MCF 10A (cell line): ENCODE measurements at regions of chr6 and their contacts with region 1.

Region 1: DNA sequence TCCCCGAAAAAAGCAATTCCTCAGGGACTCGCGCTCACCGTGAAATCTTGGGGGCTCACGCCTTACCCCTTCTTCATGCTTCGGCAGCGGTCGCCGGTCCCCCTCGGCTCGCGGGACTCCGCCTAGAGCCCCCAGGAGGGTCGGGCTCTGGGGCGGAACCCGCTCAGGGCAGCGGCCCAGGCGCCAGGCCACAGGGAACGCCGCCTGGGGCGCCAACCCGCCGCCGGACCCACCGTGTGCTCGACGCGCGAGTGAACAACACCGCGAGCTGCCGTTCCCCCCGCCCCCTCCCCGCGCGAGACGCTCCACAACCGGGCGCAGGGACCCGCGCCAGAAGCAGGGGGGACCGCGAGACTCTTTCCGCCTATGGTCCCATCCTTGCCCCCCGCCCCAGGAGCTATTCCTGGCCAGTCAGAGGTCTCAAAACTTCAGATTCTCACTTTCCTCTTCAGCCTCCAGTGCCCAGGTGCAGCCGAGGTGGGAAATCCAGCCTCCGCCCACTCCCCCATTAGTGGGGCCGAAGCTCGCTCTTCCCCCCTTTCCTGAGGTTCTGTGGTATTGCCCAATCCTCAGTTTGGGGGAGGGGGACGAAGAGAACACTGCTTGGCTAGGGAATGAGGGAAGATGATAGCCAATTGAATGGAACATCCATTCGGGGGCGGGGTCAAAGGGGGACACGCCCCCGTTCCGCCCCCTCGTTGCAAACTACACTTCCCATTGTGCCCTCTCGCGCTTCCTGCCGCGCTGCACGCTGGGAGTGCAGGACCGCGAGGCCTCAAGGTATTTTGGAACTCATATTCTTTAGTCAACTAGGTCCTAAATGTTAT is at the start of gene WASF1:
- DNase-seq: peak; percentile 99
- H3K4me3 Mint-ChIP-seq: no peak within 1 kb of the TSS
- H3K27ac Mint-ChIP-seq: peak within 1 kb of the TSS; percentile 40
- H3K4me1 Mint-ChIP-seq: peaks cover 16% of the 10 kb centered on the region
- H3K27me3 Mint-ChIP-seq: no peaks in the 10 kb centered on the region
- CTCF ChIP-seq: no peak
- total RNA-seq, gene WASF1: 50.5 and 55.7 TPM in 2 replicates

Region 2: GRCh38 chr6:109961666-109962065 is 217.9 kb before region 1 on chr6:
- CTCF ChIA-PET with region 1: no interaction called
- POLR2A ChIA-PET with region 1: no interaction called
- intact Hi-C with region 1: no loop called
- DNase-seq: peak; percentile 39
- H3K4me3 Mint-ChIP-seq: no peak overlapping the region
- H3K27ac Mint-ChIP-seq: no peak overlapping the region
- H3K4me1 Mint-ChIP-seq: peaks cover 8% of the 10 kb centered on the region
- H3K27me3 Mint-ChIP-seq: no peaks in the 10 kb centered on the region
- CTCF ChIP-seq: no peak

Region 3: GRCh38 chr6:110083875-110084585 is 95.6 kb before region 1 on chr6:
- CTCF ChIA-PET with region 1: no interaction called
- POLR2A ChIA-PET with region 1: no interaction called
- intact Hi-C with region 1: loop called (anchors 5 kb)
- DNase-seq: no peak
- H3K4me3 Mint-ChIP-seq: no peak overlapping the region
- H3K27ac Mint-ChIP-seq: no peak overlapping the region
- H3K4me1 Mint-ChIP-seq: no peaks in the 10 kb centered on the region
- H3K27me3 Mint-ChIP-seq: no peaks in the 10 kb centered on the region
- CTCF ChIP-seq: no peak

Region 4: GRCh38 chr6:110140650-110141049 is 39.0 kb before region 1 on chr6:
- CTCF ChIA-PET with region 1: interaction called, 4 read pairs
- POLR2A ChIA-PET with region 1: no interaction called
- intact Hi-C with region 1: loop called (anchors 1 kb)
- DNase-seq: peak; percentile 64
- H3K4me3 Mint-ChIP-seq: no peak overlapping the region
- H3K27ac Mint-ChIP-seq: peak overlapping the region; percentile 95
- H3K4me1 Mint-ChIP-seq: peaks cover 18% of the 10 kb centered on the region
- H3K27me3 Mint-ChIP-seq: no peaks in the 10 kb centered on the region
- CTCF ChIP-seq: no peak

Region 5: DNA sequence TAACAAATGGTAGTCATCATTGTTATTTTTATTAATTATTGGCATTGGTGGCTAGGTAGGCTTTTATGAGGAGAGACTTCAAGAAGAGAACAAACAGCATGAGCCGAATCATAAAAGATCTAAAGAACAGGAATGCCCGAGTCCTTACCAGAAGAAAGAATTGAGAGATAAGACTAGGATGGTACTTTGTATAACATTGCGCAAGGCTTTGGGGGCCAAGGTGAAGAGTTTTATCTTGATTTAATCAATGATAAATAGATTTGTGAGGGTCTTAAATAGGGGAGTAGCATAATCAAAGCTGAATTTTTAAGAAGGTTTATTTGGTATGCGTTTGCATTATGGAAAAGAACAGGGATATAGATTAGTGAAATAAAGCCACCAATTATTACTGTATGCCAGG is 16.0 kb after region 1 on chr6:
- CTCF ChIA-PET with region 1: interaction called, 4 read pairs
- POLR2A ChIA-PET with region 1: interaction called, 12 read pairs
- intact Hi-C with region 1: no loop called
- DNase-seq: no peak
- H3K4me3 Mint-ChIP-seq: no peak overlapping the region
- H3K27ac Mint-ChIP-seq: no peak overlapping the region
- H3K4me1 Mint-ChIP-seq: no peaks in the 10 kb centered on the region
- H3K27me3 Mint-ChIP-seq: no peaks in the 10 kb centered on the region
- CTCF ChIP-seq: no peak

Region 6: GRCh38 chr6:110360676-110361075 is 181.1 kb after region 1 on chr6:
- CTCF ChIA-PET with region 1: no interaction called
- POLR2A ChIA-PET with region 1: no interaction called
- intact Hi-C with region 1: no loop called
- DNase-seq: no peak
- H3K4me3 Mint-ChIP-seq: no peak overlapping the region
- H3K27ac Mint-ChIP-seq: no peak overlapping the region
- H3K4me1 Mint-ChIP-seq: no peaks in the 10 kb centered on the region
- H3K27me3 Mint-ChIP-seq: peaks cover 63% of the 10 kb centered on the region
- CTCF ChIP-seq: no peak

Region 7: GRCh38 chr6:110389689-110390382 is 210.2 kb after region 1 on chr6:
- CTCF ChIA-PET with region 1: interaction called, 9 read pairs
- POLR2A ChIA-PET with region 1: interaction called, 9 read pairs
- intact Hi-C with region 1: loop called (anchors 1 kb)
- DNase-seq: no peak
- H3K4me3 Mint-ChIP-seq: no peak overlapping the region
- H3K27ac Mint-ChIP-seq: no peak overlapping the region
- H3K4me1 Mint-ChIP-seq: no peaks in the 10 kb centered on the region
- H3K27me3 Mint-ChIP-seq: no peaks in the 10 kb centered on the region
- CTCF ChIP-seq: no peak